Activated CD8-positive, alpha-beta T cell treated with anti-CD3 and anti-CD28 coated beads for 36 hours (primary cell): ENCODE measurements at regions of chr9 and their contacts with region 1.

Region 1: GRCh38 chr9:136978073-136978864 is 965 bp downstream of the PTGDS start:
- DNase-seq: peak; percentile 76
- ATAC-seq: peak; percentile 75
- H3K4me3 Mint-ChIP-seq: no peak overlapping the region
- H3K27ac Mint-ChIP-seq: no peak overlapping the region
- H3K4me1 Mint-ChIP-seq: peaks cover 20% of the 10 kb centered on the region
- H3K27me3 Mint-ChIP-seq: no peaks in the 10 kb centered on the region
- CTCF ChIP-seq: no peak

Region 2: DNA sequence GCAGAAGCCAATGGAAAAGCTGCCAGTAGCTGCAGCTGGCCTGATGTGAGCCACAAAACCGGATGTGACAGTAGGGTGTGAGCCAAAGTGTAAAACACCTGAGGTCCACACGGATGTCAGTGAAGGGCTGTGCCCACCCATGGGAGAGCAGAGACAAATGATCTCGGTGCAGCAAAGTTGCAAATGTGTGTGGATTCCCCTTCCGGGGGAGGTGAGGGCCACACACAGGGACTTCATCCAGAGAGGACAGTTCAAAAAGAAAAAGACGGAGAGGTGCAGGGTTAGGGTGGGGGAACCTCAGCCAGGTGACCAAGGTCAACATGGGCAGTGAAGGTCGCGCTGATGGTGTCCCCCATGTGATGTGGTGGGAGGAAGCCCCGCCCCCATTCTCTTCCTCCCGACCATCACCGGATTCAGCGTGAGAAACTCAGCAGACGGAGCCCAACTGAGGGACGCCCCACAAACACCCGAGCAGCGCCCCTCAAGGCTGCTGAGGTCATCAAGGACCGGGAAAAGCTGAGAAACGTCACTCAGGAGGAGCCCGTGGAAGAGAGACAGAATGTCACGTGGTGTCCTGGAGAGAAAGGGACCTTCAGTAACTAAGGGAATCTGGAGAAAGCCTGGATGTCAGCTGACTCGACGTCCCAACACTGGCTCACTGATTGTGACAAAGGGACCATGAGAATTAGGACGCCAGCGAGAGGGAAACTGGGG is 12.3 kb before region 1 on chr9:
- CTCF ChIA-PET with region 1: interaction called, 7 read pairs
- POLR2A ChIA-PET with region 1: interaction called, 10 read pairs
- intact Hi-C with region 1: no loop called
- DNase-seq: peak; percentile 73
- ATAC-seq: peak; percentile 81
- H3K4me3 Mint-ChIP-seq: peak overlapping the region; percentile 39
- H3K27ac Mint-ChIP-seq: peak overlapping the region; percentile 53
- H3K4me1 Mint-ChIP-seq: peaks cover 23% of the 10 kb centered on the region
- H3K27me3 Mint-ChIP-seq: no peaks in the 10 kb centered on the region
- CTCF ChIP-seq: no peak